Activated T-helper 1 cell treated with anti-CD3 and anti-CD28 coated beads, Interleukin-12 subunit alpha, Interleukin-12 subunit beta, Interleukin-2, Interleukin-4 antibody, amounts not matched to agents 30 ng/mL and 10 ng/mL and 1 ng/mL, durations not matched to agents 14 hours and 24 hours and 36 hours (primary cell): ENCODE measurements at regions of chr3 and their contacts with region 1.

Region 1: DNA sequence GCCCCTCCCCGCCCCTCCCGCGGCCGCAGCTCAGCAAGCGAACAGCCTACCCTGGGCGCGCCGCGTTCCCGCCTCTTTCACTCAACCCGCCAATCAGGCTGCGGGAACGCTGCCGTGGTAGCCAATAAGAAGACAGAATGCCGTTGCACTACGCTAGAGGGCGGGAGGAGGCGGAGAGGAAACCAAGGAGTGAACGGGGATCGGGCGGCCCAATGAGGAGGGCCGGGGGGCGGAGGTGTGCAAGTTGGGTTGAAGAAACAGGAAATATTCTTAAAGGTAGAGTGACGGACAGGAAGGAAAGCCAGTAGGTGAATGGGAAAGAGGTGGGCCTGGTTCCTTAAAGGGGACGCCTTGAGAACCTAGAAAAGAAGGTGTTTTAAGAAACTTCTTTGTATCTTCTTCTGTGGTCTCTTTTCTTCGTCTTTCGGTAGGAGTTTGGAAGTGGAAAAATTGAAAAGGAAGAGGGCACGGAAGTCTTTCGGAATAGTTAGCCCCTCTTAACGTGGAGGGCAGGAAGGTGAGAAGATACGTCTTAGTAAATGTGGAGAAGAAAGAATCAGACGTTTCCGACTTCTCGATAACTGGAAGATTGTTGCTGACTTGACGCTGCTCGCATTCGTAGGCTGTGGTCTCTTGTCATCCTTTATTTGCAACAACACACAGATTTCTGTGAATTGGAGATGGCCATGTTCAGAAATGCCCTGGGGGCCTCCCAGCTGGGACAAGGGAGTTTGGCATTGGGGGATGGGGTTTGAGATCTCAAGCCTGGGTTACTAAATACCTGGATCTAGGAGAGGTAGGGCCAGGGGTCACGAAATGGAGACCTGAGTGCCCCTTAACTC is 437 bp upstream of the USF3 start:
- DNase-seq: peak; percentile 99
- H3K4me3 Mint-ChIP-seq: no peak overlapping the region
- H3K27ac Mint-ChIP-seq: no peak overlapping the region
- H3K4me1 Mint-ChIP-seq: peaks cover 20% of the 10 kb centered on the region
- H3K27me3 Mint-ChIP-seq: no peaks in the 10 kb centered on the region

Region 2: GRCh38 chr3:113019182-113020137 is 677.4 kb before region 1 on chr3:
- intact Hi-C with region 1: loop called (anchors 1 kb)
- DNase-seq: peak; percentile 77
- H3K4me3 Mint-ChIP-seq: peak overlapping the region; percentile 91
- H3K27ac Mint-ChIP-seq: peak overlapping the region; percentile 89
- H3K4me1 Mint-ChIP-seq: peaks cover 58% of the 10 kb centered on the region
- H3K27me3 Mint-ChIP-seq: no peaks in the 10 kb centered on the region

Region 3: DNA sequence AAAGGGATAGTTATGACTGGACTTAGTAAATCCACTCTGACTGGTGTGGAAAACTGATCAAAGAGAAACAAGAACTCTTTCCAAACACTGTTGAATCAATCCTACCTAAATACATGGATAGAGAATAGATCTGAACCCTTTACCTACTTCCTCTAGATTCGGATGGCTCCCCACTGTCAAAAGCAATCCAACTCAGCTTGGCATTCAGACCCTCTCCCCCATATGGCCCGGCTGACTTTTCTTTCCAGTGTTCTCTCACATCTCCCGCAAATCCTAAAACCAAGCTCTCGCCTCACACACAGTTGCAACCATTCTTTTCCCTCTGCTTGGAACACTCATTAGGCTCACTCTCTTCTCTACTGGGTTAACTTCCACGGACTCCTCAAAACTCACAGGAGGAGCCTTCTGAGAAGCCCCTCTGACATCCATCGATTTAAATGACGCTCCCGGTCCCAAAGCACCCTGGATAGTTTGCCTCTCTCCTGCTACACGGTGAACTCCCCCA is 182.6 kb before region 1 on chr3:
- intact Hi-C with region 1: loop called (anchors 1 kb)
- DNase-seq: no peak
- H3K4me3 Mint-ChIP-seq: no peak overlapping the region
- H3K27ac Mint-ChIP-seq: no peak overlapping the region
- H3K4me1 Mint-ChIP-seq: peaks cover 7% of the 10 kb centered on the region
- H3K27me3 Mint-ChIP-seq: peaks cover 24% of the 10 kb centered on the region

Region 4: GRCh38 chr3:113606539-113607218 is 90.2 kb before region 1 on chr3:
- intact Hi-C with region 1: loop called (anchors 2 kb)
- DNase-seq: peak; percentile 47
- H3K4me3 Mint-ChIP-seq: no peak overlapping the region
- H3K27ac Mint-ChIP-seq: no peak overlapping the region
- H3K4me1 Mint-ChIP-seq: peaks cover 24% of the 10 kb centered on the region
- H3K27me3 Mint-ChIP-seq: no peaks in the 10 kb centered on the region

Region 5: GRCh38 chr3:113736548-113737089 is 39.7 kb after region 1 on chr3:
- intact Hi-C with region 1: loop called (anchors 2 kb)
- DNase-seq: peak; percentile 12
- H3K4me3 Mint-ChIP-seq: no peak overlapping the region
- H3K27ac Mint-ChIP-seq: no peak overlapping the region
- H3K4me1 Mint-ChIP-seq: peaks cover 19% of the 10 kb centered on the region
- H3K27me3 Mint-ChIP-seq: no peaks in the 10 kb centered on the region

Region 6: GRCh38 chr3:114213627-114214541 is 517.0 kb after region 1 on chr3:
- intact Hi-C with region 1: loop called (anchors 1 kb)
- DNase-seq: peak; percentile 57
- H3K4me3 Mint-ChIP-seq: no peak overlapping the region
- H3K27ac Mint-ChIP-seq: no peak overlapping the region
- H3K4me1 Mint-ChIP-seq: no peaks in the 10 kb centered on the region
- H3K27me3 Mint-ChIP-seq: no peaks in the 10 kb centered on the region